PC-3 (cell line): ENCODE measurements at regions of chr20 and their contacts with region 1.

Region 1: GRCh38 chr20:16573001-16573965 is at the start of gene KIF16B:
- DNase-seq: peak; percentile 95
- ATAC-seq: peak; percentile 81
- H3K4me3 ChIP-seq: peak within 1 kb of the TSS; percentile 82
- H3K27ac ChIP-seq: peak within 1 kb of the TSS; percentile 16
- H3K4me1 ChIP-seq: peaks cover 24% of the 10 kb centered on the region
- H3K27me3 ChIP-seq: no peaks in the 10 kb centered on the region
- CTCF ChIP-seq: no peak
- total RNA-seq, gene KIF16B: 11.1 and 12.7 TPM in 2 replicates

Region 2: DNA sequence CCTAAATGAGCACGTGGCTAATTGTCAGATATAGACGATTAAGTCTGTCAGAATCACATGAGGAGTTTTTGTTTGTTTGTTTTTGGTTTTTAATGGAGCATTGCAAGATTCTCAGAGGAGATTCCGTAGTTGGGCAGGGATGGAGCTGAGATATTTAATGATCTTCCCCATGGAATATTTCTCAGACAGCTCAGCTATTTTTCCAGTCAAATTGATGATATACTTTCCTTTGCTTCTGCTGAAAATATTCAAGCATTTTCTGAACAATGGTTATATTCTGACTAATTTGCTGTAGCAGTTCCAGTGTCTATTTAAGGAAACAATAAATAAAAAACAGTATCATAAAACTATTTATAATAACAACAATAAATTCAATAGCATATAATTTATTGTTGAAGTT is 348.4 kb before region 1 on chr20:
- CTCF ChIA-PET with region 1: no interaction called
- POLR2A ChIA-PET with region 1: no interaction called
- intact Hi-C with region 1: no loop called
- DNase-seq: no peak
- ATAC-seq: no peak
- H3K4me3 ChIP-seq: no peak overlapping the region
- H3K27ac ChIP-seq: no peak overlapping the region
- H3K4me1 ChIP-seq: peaks cover 12% of the 10 kb centered on the region
- H3K27me3 ChIP-seq: no peaks in the 10 kb centered on the region
- CTCF ChIP-seq: no peak

Region 3: GRCh38 chr20:16517946-16518783 is 55.1 kb before region 1 on chr20:
- CTCF ChIA-PET with region 1: no interaction called
- POLR2A ChIA-PET with region 1: no interaction called
- intact Hi-C with region 1: loop called (anchors 2 kb)
- DNase-seq: peak; percentile 78
- ATAC-seq: peak; percentile 98
- H3K4me3 ChIP-seq: no peak overlapping the region
- H3K27ac ChIP-seq: no peak overlapping the region
- H3K4me1 ChIP-seq: no peaks in the 10 kb centered on the region; the same call in 1 of the 2 replicates
- H3K27me3 ChIP-seq: no peaks in the 10 kb centered on the region
- CTCF ChIP-seq: peak; percentile 95

Region 4: GRCh38 chr20:16528078-16528477 is 45.2 kb before region 1 on chr20:
- CTCF ChIA-PET with region 1: no interaction called
- POLR2A ChIA-PET with region 1: no interaction called
- intact Hi-C with region 1: loop called (anchors 2 kb)
- DNase-seq: peak; percentile 93
- ATAC-seq: peak; percentile 92
- H3K4me3 ChIP-seq: peak overlapping the region; percentile 11; the same call in 1 of the 2 replicates
- H3K27ac ChIP-seq: peak overlapping the region; percentile 73
- H3K4me1 ChIP-seq: peaks cover 36% of the 10 kb centered on the region
- H3K27me3 ChIP-seq: no peaks in the 10 kb centered on the region
- CTCF ChIP-seq: no peak

Region 5: GRCh38 chr20:16729565-16730456 is 156.5 kb after region 1 on chr20 and contains the start of gene SNRPB2:
- CTCF ChIA-PET with region 1: no interaction called
- POLR2A ChIA-PET with region 1: no interaction called
- intact Hi-C with region 1: loop called (anchors 10 kb)
- DNase-seq: peak; percentile 95
- ATAC-seq: peak; percentile 96
- H3K4me3 ChIP-seq: peak within 1 kb of the TSS; percentile 80
- H3K27ac ChIP-seq: peak within 1 kb of the TSS; percentile 22; the same call in 1 of the 2 replicates
- H3K4me1 ChIP-seq: peaks cover 15% of the 10 kb centered on the region
- H3K27me3 ChIP-seq: peaks cover 7% of the 10 kb centered on the region; the same call in 1 of the 2 replicates
- CTCF ChIP-seq: no peak
- total RNA-seq, gene SNRPB2: 76.8 and 89.7 TPM in 2 replicates

Region 6: GRCh38 chr20:16761305-16761829 is 188.1 kb after region 1 on chr20:
- CTCF ChIA-PET with region 1: no interaction called
- POLR2A ChIA-PET with region 1: no interaction called
- intact Hi-C with region 1: loop called (anchors 10 kb)
- DNase-seq: peak; percentile 86
- ATAC-seq: peak; percentile 74
- H3K4me3 ChIP-seq: peak overlapping the region; percentile 41; the same call in 1 of the 2 replicates
- H3K27ac ChIP-seq: no peak overlapping the region
- H3K4me1 ChIP-seq: peaks cover 36% of the 10 kb centered on the region
- H3K27me3 ChIP-seq: no peaks in the 10 kb centered on the region
- CTCF ChIP-seq: peak; percentile 94